CD14-positive monocyte (primary cell): ENCODE measurements at regions of chr1 and their contacts with region 1.

Region 1: DNA sequence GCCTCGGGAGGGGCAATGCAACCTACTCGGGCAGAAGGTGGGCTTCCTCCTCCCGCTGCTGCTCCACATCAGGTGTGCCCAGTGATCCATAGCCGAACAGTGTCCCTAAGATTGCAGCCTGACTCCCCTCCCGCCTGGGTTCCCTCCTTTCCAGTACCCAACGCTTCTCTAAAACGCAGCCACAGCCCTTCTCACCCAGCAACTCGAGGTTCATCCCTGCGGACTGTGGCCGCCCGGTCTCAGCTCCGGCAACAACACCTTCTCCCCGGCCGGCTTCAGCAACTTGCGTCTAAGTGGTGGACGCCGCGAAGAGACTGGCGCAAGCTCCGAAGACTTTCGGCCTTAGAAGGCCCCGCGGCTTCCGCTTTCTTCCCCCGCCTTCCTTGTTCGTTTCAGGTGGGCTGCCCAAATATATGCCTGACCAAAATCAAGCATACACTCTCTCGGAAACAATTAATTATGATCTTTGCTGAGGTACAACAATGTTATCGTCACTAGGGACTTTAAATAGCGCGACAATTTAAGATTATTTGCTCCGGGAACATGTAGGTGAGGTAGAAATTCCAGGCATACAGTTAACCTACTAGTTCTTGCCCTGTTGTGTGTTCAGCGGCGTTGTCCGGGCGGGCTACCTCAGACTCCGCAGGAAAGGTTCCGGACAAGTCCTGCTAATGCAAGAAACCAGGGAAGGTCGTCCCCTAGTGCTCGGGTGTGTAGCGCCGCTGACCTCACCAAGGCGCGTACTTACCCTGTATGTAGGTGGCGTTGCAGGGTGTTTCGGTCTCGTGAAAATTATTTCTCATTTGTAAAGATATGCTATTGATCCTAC is at the start of gene RBBP5:
- DNase-seq: peak; percentile 93 to 98 (median 98)
- H3K4me3 ChIP-seq: peak within 1 kb of the TSS; percentile 97 to 99 (median 99)
- H3K4me3 Mint-ChIP-seq: peak within 1 kb of the TSS; percentile 98 to 100
- H3K27ac ChIP-seq: peak within 1 kb of the TSS; percentile 81 to 97
- H3K27ac Mint-ChIP-seq: peak within 1 kb of the TSS; percentile 98 to 100 (median 100)
- H3K4me1 ChIP-seq: peaks cover 25% of the 10 kb centered on the region in 2 donors
- H3K4me1 Mint-ChIP-seq: peaks cover 40% of the 10 kb centered on the region
- H3K27me3 ChIP-seq: no peaks in the 10 kb centered on the region
- H3K27me3 Mint-ChIP-seq: peaks cover 0 to 2% (median 0%) of the 10 kb centered on the region in 3 donors
- CTCF ChIP-seq: peak; percentile 65
- polyA plus RNA-seq, gene RBBP5: 4.9 to 10.2 (median 8.1) TPM

Region 2: GRCh38 chr1:204989266-204990058 is 132.4 kb before region 1 on chr1:
- intact Hi-C with region 1: no loop called
- DNase-seq: peak; percentile 56 to 71 (median 67)
- H3K4me3 ChIP-seq: no peak overlapping the region
- H3K4me3 Mint-ChIP-seq: no peak overlapping the region
- H3K27ac ChIP-seq: no peak overlapping the region
- H3K27ac Mint-ChIP-seq: no peak overlapping the region
- H3K4me1 ChIP-seq: peaks cover 21 to 24% of the 10 kb centered on the region in 2 donors
- H3K4me1 Mint-ChIP-seq: peaks cover 33% of the 10 kb centered on the region
- H3K27me3 ChIP-seq: no peaks in the 10 kb centered on the region
- H3K27me3 Mint-ChIP-seq: peaks cover 1 to 3% (median 2%) of the 10 kb centered on the region in 3 donors
- CTCF ChIP-seq: peak; percentile 96

Region 3: GRCh38 chr1:205042911-205043806 is 78.7 kb before region 1 on chr1 and contains the start of gene CNTN2:
- intact Hi-C with region 1: no loop called
- DNase-seq: no peak
- H3K4me3 ChIP-seq: no peak within 1 kb of the TSS
- H3K4me3 Mint-ChIP-seq: peak within 1 kb of the TSS in 1 of 2 donors; percentile 60
- H3K27ac ChIP-seq: no peak within 1 kb of the TSS
- H3K27ac Mint-ChIP-seq: no peak within 1 kb of the TSS
- H3K4me1 ChIP-seq: no peaks in the 10 kb centered on the region
- H3K4me1 Mint-ChIP-seq: no peaks in the 10 kb centered on the region
- H3K27me3 ChIP-seq: peaks cover 20 to 54% of the 10 kb centered on the region in 2 donors
- H3K27me3 Mint-ChIP-seq: peaks cover 59 to 67% (median 62%) of the 10 kb centered on the region in 3 donors
- CTCF ChIP-seq: no peak
- polyA plus RNA-seq, gene CNTN2: not detected

Region 4: GRCh38 chr1:205111354-205111753 is 10.5 kb before region 1 on chr1:
- intact Hi-C with region 1: no loop called
- DNase-seq: no peak
- H3K4me3 ChIP-seq: no peak overlapping the region
- H3K4me3 Mint-ChIP-seq: no peak overlapping the region
- H3K27ac ChIP-seq: peak overlapping the region in 1 of 2 donors; percentile 3
- H3K27ac Mint-ChIP-seq: no peak overlapping the region
- H3K4me1 ChIP-seq: no peaks in the 10 kb centered on the region
- H3K4me1 Mint-ChIP-seq: no peaks in the 10 kb centered on the region
- H3K27me3 ChIP-seq: no peaks in the 10 kb centered on the region
- H3K27me3 Mint-ChIP-seq: no peaks in the 10 kb centered on the region
- CTCF ChIP-seq: no peak

Region 5: DNA sequence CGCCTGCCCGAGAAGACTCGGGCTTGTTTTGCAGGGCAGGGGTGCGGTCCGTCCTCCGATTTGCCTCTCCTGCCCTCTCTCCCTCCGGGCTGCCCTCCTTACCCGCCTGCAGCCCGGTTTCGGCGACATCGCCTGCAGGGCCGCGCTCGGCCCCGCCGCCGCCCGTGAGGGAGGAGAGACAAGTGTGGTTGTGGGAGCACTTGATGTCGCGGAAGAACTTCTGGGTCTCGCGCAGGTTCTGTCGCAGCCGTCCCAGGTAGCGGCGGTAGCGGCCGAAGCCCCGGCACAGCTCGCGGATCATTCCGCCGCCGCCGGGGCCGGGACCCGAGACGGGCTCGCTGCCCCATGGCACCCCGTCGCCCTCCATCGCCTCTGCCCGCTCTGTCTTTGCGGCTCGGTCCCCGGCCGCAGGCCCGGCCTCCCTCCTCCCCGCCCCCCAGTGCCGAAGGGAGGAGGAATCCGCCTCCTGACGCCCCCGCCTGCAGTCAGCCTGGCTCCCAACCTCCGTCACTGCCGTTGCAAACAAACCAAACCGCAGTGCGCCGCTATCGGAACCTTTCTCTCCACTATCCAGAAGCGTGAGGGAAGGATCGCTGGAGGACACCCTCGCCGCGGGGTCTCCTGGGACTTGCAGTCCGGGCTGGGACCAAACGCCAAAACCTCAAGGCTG is 89.4 kb after region 1 on chr1 and contains the start of gene DSTYK:
- intact Hi-C with region 1: loop called (anchors 5 kb)
- DNase-seq: peak; percentile 83 to 87 (median 86)
- H3K4me3 ChIP-seq: peak within 1 kb of the TSS; percentile 72 to 98 (median 89)
- H3K4me3 Mint-ChIP-seq: peak within 1 kb of the TSS; percentile 96 to 98
- H3K27ac ChIP-seq: peak within 1 kb of the TSS; percentile 81 to 85
- H3K27ac Mint-ChIP-seq: peak within 1 kb of the TSS; percentile 92 to 98 (median 96)
- H3K4me1 ChIP-seq: peaks cover 43 to 46% of the 10 kb centered on the region in 2 donors
- H3K4me1 Mint-ChIP-seq: peaks cover 54% of the 10 kb centered on the region
- H3K27me3 ChIP-seq: no peaks in the 10 kb centered on the region
- H3K27me3 Mint-ChIP-seq: peaks cover 0 to 3% (median 1%) of the 10 kb centered on the region in 3 donors
- CTCF ChIP-seq: no peak
- polyA plus RNA-seq, gene DSTYK: 2.9 to 6.5 (median 3.8) TPM

Region 6: GRCh38 chr1:205255941-205256780 is 134.3 kb after region 1 on chr1:
- intact Hi-C with region 1: loop called (anchors 5 to 10 kb)
- DNase-seq: peak; percentile 80 to 85 (median 84)
- H3K4me3 ChIP-seq: no peak overlapping the region
- H3K4me3 Mint-ChIP-seq: no peak overlapping the region
- H3K27ac ChIP-seq: no peak overlapping the region
- H3K27ac Mint-ChIP-seq: no peak overlapping the region
- H3K4me1 ChIP-seq: peaks cover 8 to 17% of the 10 kb centered on the region in 2 donors
- H3K4me1 Mint-ChIP-seq: peaks cover 16% of the 10 kb centered on the region
- H3K27me3 ChIP-seq: no peaks in the 10 kb centered on the region
- H3K27me3 Mint-ChIP-seq: peaks cover 0 to 6% (median 5%) of the 10 kb centered on the region in 3 donors
- CTCF ChIP-seq: peak; percentile 85

Region 7: GRCh38 chr1:205750138-205751035 is 628.5 kb after region 1 on chr1 and contains the start of gene NUCKS1:
- intact Hi-C with region 1: loop called in 1 of 2 experiments (anchors 5 kb)
- DNase-seq: peak; percentile 96 to 97 (median 97)
- H3K4me3 ChIP-seq: peak within 1 kb of the TSS; percentile 87 to 94 (median 92)
- H3K4me3 Mint-ChIP-seq: peak within 1 kb of the TSS; percentile 97 to 99
- H3K27ac ChIP-seq: peak within 1 kb of the TSS; percentile 88 to 95
- H3K27ac Mint-ChIP-seq: peak within 1 kb of the TSS; percentile 94 to 100 (median 97)
- H3K4me1 ChIP-seq: peaks cover 14 to 27% of the 10 kb centered on the region in 2 donors
- H3K4me1 Mint-ChIP-seq: peaks cover 22% of the 10 kb centered on the region
- H3K27me3 ChIP-seq: no peaks in the 10 kb centered on the region
- H3K27me3 Mint-ChIP-seq: peaks cover 1 to 3% (median 2%) of the 10 kb centered on the region in 3 donors
- CTCF ChIP-seq: no peak
- polyA plus RNA-seq, gene NUCKS1: 4.2 to 4.9 (median 4.2) TPM